ENCODE measurements at regions of chr20 and their contacts with region 1.

Region 1: GRCh38 chr20:63627129-63627750 is 339 bp upstream of the GMEB2 start:
- DNase-seq: peak; percentile 96
- ATAC-seq: peak; percentile 85
- H3K4me3 Mint-ChIP-seq: peak overlapping the region; percentile 96
- H3K27ac Mint-ChIP-seq: peak overlapping the region; percentile 94
- H3K4me1 Mint-ChIP-seq: peaks cover 22% of the 10 kb centered on the region
- H3K27me3 Mint-ChIP-seq: no peaks in the 10 kb centered on the region

Region 2: DNA sequence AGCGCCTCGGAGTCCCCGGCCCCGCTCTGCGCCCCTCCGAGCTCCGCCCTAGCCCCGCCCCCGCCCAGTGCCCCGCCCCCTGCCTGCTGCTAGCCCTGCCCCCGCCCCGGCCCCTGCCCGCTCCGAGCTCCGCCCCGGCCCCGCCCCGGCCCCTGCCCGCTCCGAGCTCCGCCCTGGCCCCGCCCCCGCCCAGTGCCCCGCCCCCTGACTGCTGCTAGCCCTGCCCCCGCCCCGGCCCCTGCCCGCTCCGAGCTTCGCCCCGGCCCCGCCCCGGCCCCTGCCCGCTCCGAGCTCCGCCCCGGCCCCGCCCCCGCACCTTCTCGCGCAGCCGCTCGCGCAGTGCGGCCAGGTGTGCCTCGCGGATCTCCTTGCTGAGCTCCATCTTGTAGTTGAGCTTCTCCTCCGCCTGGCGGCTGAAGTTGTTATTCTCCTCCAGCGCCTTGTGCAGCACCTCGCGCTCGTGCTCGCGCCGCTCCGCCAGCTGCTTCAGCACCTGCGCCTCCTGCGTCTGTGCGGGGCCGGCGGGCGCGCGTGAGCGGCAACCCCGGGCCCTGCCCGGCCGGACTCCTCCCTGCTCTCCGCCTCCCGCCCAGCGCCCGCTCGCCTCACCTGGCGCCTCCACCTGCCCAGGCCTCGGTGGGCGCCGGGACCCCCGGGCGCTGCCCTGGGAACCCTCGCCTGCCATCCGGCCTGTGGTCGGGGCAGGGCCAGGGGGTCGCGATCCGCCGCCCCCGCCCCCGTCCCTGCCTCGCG is 14.7 kb after region 1 on chr20:
- CTCF ChIA-PET with region 1: interaction called, 20 read pairs
- POLR2A ChIA-PET with region 1: interaction called, 34 read pairs
- DNase-seq: peak; percentile 98
- ATAC-seq: peak; percentile 81
- H3K4me3 Mint-ChIP-seq: peak overlapping the region; percentile 74
- H3K27ac Mint-ChIP-seq: peak overlapping the region; percentile 52
- H3K4me1 Mint-ChIP-seq: peaks cover 25% of the 10 kb centered on the region
- H3K27me3 Mint-ChIP-seq: no peaks in the 10 kb centered on the region

Measured in activated CD8-positive, alpha-beta T cell treated with anti-CD3 and anti-CD28 coated beads, Interleukin-2, amount 10 ng/mL, durations not matched to agents 7 days and 5 days (primary cell).